HCT116 (cell line): ENCODE measurements at regions of chr11 and their contacts with region 1.

Region 1: DNA sequence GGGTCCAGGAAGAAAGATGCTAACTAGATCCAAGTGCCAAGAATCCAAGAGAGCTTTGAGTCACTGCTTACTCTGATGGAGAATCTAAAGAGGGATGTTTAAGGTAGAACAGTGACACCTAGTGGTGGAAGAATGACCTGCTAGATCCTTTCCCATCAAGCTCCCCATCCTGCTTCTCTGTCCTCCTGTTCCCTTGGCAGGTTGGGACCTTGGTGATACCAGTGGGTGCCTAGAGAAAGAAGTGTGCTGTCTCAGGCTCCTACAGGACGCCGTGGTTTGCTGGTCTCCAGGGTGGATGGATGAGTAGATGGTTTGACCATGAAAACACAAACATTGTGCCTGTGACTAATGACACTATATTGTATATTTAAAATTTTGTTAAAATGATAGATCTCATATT is 383.7 kb downstream of the TMEM135 start:
- DNase-seq: peak; percentile 68
- ATAC-seq: peak; percentile 94
- H3K4me3 ChIP-seq: no peak overlapping the region
- H3K27ac ChIP-seq: no peak overlapping the region
- H3K4me1 ChIP-seq: no peaks in the 10 kb centered on the region
- H3K27me3 ChIP-seq: no peaks in the 10 kb centered on the region; the same call in 1 of the 2 replicates
- CTCF ChIP-seq: peak; percentile 54 to 71 (median 71); a peak in 5 of 6 replicates
- POLR2A ChIP-seq: no peak
- RAD21 ChIP-seq: peak; percentile 75

Region 2: DNA sequence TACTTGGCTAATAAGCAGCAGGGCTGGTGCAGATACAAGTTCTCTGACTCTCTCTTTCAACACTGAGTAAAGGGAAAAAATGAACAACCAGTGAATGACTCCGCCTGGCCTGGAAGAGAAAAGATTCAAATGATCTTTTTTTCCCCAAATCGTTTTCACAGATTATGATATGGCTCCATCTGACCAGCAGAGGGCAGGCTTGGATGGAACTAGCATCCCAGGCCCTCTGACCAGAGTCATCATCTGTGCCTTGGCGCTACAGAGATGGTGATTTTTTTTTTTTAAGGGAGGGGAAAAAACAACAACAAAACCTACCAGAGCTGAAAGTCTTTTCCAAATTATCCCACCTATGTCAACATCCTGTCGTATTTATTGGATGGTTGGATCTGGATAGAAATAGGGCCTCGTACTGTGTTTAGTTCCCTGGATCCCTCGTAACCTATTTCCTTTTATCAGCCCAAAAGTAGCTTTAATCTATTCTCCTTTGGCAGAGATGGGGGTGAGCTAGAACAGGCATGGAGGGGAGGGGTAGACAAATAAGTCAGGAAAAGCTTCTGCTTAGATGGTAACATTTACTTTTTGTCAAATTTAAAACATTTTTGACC is 551.4 kb before region 1 on chr11:
- CTCF ChIA-PET with region 1: no interaction called
- POLR2A ChIA-PET with region 1: no interaction called
- RAD21 ChIA-PET with region 1: no interaction called
- intact Hi-C with region 1: loop called (anchors 5 kb)
- DNase-seq: peak; percentile 41
- ATAC-seq: peak; percentile 97
- H3K4me3 ChIP-seq: no peak overlapping the region
- H3K27ac ChIP-seq: no peak overlapping the region
- H3K4me1 ChIP-seq: no peaks in the 10 kb centered on the region
- H3K27me3 ChIP-seq: no peaks in the 10 kb centered on the region
- CTCF ChIP-seq: peak; percentile 74 to 89 (median 81)
- POLR2A ChIP-seq: no peak
- RAD21 ChIP-seq: peak; percentile 94

Region 3: DNA sequence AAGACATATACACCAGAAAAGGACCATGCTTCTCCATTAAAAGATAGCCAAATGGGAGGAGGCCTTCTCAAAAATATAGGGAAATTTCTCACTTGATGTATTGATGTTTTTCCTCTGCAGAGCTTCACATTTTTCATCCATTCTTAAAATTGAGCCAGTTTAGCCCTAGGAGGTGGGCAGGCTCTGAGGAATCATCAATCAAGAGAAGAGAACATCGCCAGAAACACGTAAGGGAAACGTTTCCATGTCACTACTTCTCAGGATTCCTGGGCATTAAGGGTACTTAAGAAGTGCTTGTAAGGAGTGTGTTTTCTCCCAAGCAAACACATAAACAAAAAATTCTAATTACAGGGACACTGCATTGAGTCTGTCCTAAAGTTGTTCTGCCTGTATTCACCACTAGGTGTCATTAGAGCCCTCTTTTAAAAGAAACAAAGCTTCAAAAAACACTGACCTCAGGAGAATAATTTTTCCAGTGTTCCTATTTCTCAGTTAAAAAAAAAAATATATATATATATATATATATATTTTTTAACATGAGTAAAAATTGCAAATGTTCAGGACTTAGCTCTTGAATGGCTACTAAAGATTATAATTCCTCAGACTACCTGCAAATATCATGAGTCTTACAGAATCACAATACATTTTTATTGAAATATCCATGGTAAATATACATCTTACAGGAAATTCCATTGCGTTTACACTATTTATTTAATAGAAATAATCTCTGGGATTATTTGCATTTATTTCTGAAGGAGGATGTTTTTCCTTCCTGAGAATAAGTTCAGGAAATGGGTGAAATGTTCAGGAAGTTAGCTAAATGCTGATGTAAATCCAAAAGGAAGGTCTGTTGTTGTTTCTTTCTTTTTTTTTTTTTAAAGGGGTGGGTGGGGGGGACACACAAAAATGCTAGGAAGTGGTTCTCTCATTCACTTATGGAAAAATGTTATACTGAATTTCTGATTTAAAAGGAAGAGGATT is 482.2 kb before region 1 on chr11:
- CTCF ChIA-PET with region 1: interaction called, 20 read pairs
- POLR2A ChIA-PET with region 1: no interaction called
- RAD21 ChIA-PET with region 1: interaction called, 4 to 5 read pairs
- intact Hi-C with region 1: loop called (anchors 1 kb)
- DNase-seq: peak; percentile 37
- ATAC-seq: peak; percentile 73
- H3K4me3 ChIP-seq: no peak overlapping the region
- H3K27ac ChIP-seq: no peak overlapping the region
- H3K4me1 ChIP-seq: no peaks in the 10 kb centered on the region
- H3K27me3 ChIP-seq: no peaks in the 10 kb centered on the region
- CTCF ChIP-seq: peak; percentile 57 to 65 (median 61); a peak in 5 of 6 replicates
- POLR2A ChIP-seq: no peak
- RAD21 ChIP-seq: peak; percentile 77

Region 4: DNA sequence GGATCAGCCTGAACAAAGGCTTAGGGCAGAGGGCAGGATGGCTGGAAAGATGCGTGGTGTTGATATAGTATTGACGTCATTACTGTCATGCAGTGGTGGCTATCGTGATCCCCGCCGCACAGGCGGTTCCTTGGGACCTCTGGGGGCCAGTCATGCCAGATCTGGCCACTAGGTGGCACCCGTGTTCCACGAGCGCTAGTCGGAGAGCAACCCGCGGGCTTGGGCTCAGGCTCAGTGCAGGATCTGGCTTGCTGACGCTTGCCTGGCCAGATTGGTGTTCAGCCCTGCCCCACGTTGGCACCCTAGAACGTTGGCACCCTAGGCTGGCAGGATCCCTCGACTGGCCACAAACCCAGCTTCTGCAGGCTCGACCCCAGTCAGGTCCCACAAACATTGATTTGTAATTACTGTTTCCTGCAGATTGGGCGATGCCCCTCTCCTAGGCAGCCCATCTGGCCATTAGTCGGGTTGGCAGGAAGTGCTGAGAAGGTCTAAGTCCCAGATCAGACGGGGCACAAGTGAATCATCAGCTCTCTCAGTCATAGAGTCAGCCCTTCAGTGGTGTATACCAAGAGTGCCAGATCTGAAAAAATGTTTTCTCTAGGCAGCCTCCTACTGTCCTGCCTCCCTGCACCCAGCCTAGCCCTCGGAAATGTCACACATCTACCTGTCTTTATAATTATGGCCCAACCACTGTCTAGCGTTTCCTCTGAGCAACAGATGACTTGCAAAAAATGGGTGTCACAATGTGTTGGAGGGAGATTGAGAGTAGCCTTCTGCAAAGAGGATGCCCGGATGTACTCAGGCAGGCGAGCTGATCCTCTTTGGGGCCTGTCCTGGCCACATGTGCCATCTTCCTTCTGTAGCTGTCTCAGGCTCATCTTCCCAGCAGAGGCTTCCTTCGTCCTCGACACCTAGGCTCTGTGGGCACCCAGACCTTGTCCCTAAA is 68.4 kb before region 1 on chr11:
- CTCF ChIA-PET with region 1: interaction called, 12 read pairs
- POLR2A ChIA-PET with region 1: no interaction called
- RAD21 ChIA-PET with region 1: interaction called in 1 of 2 experiments, 3 read pairs
- intact Hi-C with region 1: loop called (anchors 1 kb)
- DNase-seq: peak; percentile 57
- ATAC-seq: peak; percentile 100
- H3K4me3 ChIP-seq: no peak overlapping the region
- H3K27ac ChIP-seq: no peak overlapping the region
- H3K4me1 ChIP-seq: peaks cover 0 to 7% of the 10 kb centered on the region in 2 experiments; a peak in 1 of 4 replicates
- H3K27me3 ChIP-seq: no peaks in the 10 kb centered on the region
- CTCF ChIP-seq: peak; percentile 69 to 98 (median 95)
- POLR2A ChIP-seq: no peak
- RAD21 ChIP-seq: peak; percentile 95

Region 5: DNA sequence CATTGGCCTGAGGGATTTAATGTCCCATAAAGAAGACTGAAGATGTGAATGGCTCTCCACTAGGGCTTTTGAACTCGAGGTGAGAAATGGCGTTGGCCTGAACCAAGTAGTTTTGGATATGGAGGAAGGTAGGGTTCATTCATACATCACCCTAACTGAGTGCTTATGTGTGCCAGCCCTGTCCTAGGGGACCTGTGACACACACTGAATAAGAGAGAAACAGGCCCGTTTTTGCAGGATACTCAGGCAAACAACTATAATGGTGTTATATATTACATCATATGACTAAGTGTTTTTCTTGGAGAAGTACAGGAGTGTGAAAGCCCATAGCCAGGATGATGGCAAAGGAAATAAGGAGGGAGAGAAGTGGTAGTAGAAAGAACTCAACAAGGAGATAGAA is 15.6 kb before region 1 on chr11:
- CTCF ChIA-PET with region 1: interaction called, 12 read pairs
- POLR2A ChIA-PET with region 1: no interaction called
- RAD21 ChIA-PET with region 1: no interaction called
- intact Hi-C with region 1: no loop called
- DNase-seq: no peak
- ATAC-seq: no peak
- H3K4me3 ChIP-seq: no peak overlapping the region
- H3K27ac ChIP-seq: no peak overlapping the region
- H3K4me1 ChIP-seq: no peaks in the 10 kb centered on the region
- H3K27me3 ChIP-seq: no peaks in the 10 kb centered on the region
- CTCF ChIP-seq: no peak
- POLR2A ChIP-seq: no peak
- RAD21 ChIP-seq: no peak

Region 6: GRCh38 chr11:87432022-87432421 is 10.6 kb after region 1 on chr11:
- CTCF ChIA-PET with region 1: interaction called, 13 read pairs
- POLR2A ChIA-PET with region 1: no interaction called
- RAD21 ChIA-PET with region 1: no interaction called
- intact Hi-C with region 1: no loop called
- DNase-seq: no peak
- ATAC-seq: no peak
- H3K4me3 ChIP-seq: no peak overlapping the region
- H3K27ac ChIP-seq: no peak overlapping the region
- H3K4me1 ChIP-seq: no peaks in the 10 kb centered on the region
- H3K27me3 ChIP-seq: no peaks in the 10 kb centered on the region
- CTCF ChIP-seq: no peak
- POLR2A ChIP-seq: no peak
- RAD21 ChIP-seq: no peak